ENCODE measurements at regions of chr1 and their contacts with region 1.

Region 1: GRCh38 chr1:17011439-17012307 is at the start of gene ATP13A2:
- DNase-seq: peak; percentile 81
- H3K4me3 ChIP-seq: peak within 1 kb of the TSS; percentile 61 to 82 (median 81)
- H3K27ac ChIP-seq: no peak within 1 kb of the TSS
- H3K4me1 ChIP-seq: peaks cover 43% of the 10 kb centered on the region
- H3K27me3 ChIP-seq: no peaks in the 10 kb centered on the region
- CTCF ChIP-seq: no peak
- total RNA-seq, gene ATP13A2: 97.1 to 180 TPM

Region 2: DNA sequence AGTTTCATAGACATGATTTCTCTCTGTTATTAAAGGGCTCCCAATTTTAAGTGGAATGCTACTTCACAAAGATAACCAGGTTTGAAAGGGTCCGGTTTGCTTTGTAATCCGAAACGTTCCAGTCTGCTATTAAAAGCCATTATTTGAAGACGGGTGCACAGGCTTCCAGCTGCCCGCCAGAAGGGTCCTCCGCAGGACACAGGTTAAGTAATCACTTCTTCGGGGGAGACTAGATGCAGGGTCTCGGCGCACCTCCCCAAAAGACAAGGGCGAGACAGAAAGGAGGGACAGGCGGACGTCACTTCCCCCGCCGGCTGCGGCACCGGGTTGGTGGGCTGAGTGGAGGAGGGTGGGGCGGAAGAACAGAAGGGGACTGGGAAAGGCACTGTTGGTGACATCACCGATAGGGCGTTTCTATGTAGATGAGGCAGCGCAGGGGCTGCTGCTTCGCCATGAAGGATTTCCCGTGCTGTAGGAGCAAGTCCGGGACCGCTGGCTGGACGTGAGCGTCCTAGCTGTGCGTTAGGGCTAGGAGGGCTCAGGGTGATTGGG is 107.0 kb before region 1 on chr1:
- CTCF ChIA-PET with region 1: no interaction called
- dilution Hi-C with region 1: loop called (anchors 5 kb)
- in situ Hi-C with region 1: no loop called
- intact Hi-C with region 1: no loop called
- DNase-seq: peak; percentile 97
- H3K4me3 ChIP-seq: peak overlapping the region; percentile 52 to 69 (median 54)
- H3K27ac ChIP-seq: peak overlapping the region; percentile 100
- H3K4me1 ChIP-seq: peaks cover 19% of the 10 kb centered on the region
- H3K27me3 ChIP-seq: no peaks in the 10 kb centered on the region
- CTCF ChIP-seq: no peak

Region 3: DNA sequence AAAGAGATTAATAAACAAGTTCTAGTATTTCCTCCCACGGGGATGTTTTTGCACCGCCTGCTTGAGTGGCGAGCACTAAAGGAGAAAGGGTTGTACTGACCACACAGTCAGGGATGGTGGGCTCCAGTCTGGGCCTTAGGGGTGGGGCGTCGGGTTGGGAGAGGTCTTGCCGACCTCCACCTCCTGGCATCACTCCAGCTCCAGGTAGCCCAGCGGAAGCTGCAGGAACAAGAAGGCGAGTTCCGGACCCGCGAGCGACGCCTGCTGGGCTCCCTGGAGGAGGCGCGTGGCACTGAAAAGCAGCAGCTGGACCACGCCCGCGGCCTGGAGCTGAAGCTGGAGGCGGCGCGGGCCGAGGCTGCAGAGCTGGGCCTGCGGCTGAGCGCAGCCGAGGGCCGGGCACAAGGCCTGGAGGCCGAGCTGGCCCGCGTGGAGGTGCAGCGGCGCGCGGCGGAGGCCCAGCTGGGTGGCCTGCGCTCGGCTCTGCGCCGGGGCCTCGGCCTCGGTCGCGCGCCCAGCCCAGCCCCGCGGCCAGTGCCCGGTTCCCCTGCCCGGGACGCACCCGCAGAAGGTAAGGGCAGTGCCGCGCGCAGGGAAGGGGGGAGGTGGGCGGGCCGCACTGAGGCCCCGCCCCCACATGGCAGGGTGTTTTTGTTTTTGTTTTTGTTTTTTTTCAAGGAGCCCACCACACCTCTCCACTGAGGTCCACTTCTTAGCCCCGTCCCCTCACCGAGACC is 50.9 kb before region 1 on chr1:
- CTCF ChIA-PET with region 1: no interaction called
- dilution Hi-C with region 1: no loop called
- in situ Hi-C with region 1: no loop called
- intact Hi-C with region 1: loop called (anchors 10 kb)
- DNase-seq: no peak
- H3K4me3 ChIP-seq: no peak overlapping the region
- H3K27ac ChIP-seq: no peak overlapping the region
- H3K4me1 ChIP-seq: no peaks in the 10 kb centered on the region
- H3K27me3 ChIP-seq: no peaks in the 10 kb centered on the region
- CTCF ChIP-seq: no peak

Region 4: DNA sequence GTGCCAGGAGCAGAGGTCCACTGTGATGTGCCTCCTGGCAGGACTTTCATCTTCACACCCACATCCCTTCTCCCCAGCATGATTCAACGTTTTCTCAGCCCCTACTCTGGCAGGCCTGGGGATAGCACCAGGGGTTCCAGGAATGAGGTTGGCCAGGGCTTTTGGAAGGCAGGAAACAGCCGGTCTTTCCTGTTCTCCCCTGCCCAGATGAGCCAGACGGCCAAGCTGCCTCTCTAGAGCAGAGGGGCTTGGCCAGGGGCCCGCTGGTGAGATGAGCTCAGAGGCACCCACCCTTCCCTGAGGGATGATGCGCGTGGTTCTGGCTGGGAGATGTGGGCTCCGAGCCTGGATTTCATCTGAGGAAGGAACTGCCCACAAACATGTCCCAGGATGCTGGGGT is 27.0 kb before region 1 on chr1:
- CTCF ChIA-PET with region 1: no interaction called
- dilution Hi-C with region 1: no loop called
- in situ Hi-C with region 1: no loop called
- intact Hi-C with region 1: loop called (anchors 2 kb)
- DNase-seq: peak; percentile 92
- H3K4me3 ChIP-seq: no peak overlapping the region
- H3K27ac ChIP-seq: peak overlapping the region; percentile 26
- H3K4me1 ChIP-seq: peaks cover 46% of the 10 kb centered on the region
- H3K27me3 ChIP-seq: no peaks in the 10 kb centered on the region
- CTCF ChIP-seq: no peak

Region 5: GRCh38 chr1:17089506-17089905 is 77.8 kb after region 1 on chr1:
- CTCF ChIA-PET with region 1: no interaction called
- dilution Hi-C with region 1: loop called (anchors 10 kb)
- in situ Hi-C with region 1: no loop called
- intact Hi-C with region 1: no loop called
- DNase-seq: no peak
- H3K4me3 ChIP-seq: no peak overlapping the region
- H3K27ac ChIP-seq: no peak overlapping the region
- H3K4me1 ChIP-seq: peaks cover 6% of the 10 kb centered on the region
- H3K27me3 ChIP-seq: no peaks in the 10 kb centered on the region
- CTCF ChIP-seq: no peak

Region 6: DNA sequence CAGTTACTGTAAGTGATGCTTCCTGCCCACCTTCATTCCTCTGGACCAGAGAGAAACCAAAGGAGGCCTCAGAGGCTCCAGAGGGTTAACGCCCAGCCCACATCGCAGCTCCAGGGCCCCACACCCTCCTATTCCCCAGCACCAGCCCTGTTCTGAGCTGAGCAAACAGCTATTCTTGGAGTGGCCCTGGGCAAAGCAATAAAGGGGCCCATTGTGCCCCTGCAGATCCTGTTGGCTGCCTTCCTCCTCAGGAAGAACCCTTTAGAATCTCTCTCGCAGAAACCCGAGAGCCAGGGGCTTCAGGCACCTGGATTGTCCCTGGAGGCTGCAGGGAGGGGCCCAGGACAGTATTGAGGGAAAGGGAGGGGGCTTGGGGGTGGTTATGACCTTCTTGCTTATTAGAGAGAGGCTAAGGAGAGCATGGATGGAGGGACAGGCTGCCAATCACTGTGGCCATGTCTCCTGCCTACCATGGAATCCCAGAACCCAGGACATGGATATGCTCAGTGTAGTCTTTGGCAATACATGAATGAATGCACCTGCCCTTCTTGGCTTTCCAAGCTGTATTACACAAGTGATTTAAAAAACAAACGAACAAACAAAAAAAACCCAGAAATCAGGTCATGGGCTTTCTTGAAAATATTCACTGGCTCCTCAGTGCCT is 98.3 kb after region 1 on chr1:
- CTCF ChIA-PET with region 1: no interaction called
- dilution Hi-C with region 1: loop called (anchors 5 kb)
- in situ Hi-C with region 1: no loop called
- intact Hi-C with region 1: no loop called
- DNase-seq: no peak
- H3K4me3 ChIP-seq: no peak overlapping the region
- H3K27ac ChIP-seq: no peak overlapping the region
- H3K4me1 ChIP-seq: peaks cover 13% of the 10 kb centered on the region
- H3K27me3 ChIP-seq: no peaks in the 10 kb centered on the region
- CTCF ChIP-seq: no peak

Region 7: DNA sequence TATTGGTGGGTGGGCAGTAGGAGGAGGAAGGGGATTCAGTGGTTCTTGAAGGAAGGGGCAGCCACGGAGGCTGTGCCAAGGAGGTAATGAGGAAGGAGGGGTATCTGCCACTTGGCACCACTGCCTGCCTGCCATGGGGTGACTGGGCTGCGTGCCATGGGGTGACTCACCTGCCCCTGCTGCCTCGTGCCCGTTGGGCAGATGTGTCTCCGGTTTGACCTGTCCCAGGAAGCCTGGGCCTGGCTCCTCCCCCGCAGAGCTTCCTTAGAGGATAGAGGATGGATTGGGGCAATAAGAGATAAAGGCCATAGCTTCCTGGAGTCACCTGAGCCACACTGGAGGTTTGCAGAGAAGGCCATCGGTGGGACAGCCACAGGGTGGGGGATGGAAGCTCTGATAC is 238.9 kb after region 1 on chr1:
- CTCF ChIA-PET with region 1: no interaction called
- dilution Hi-C with region 1: no loop called
- in situ Hi-C with region 1: no loop called
- intact Hi-C with region 1: no loop called
- DNase-seq: peak; percentile 89
- H3K4me3 ChIP-seq: no peak overlapping the region
- H3K27ac ChIP-seq: peak overlapping the region; percentile 26
- H3K4me1 ChIP-seq: peaks cover 42% of the 10 kb centered on the region
- H3K27me3 ChIP-seq: no peaks in the 10 kb centered on the region
- CTCF ChIP-seq: no peak

Measured in mammary epithelial cell (primary cell).